CD8-positive, alpha-beta T cell (primary cell): ENCODE measurements at regions of chr16 and their contacts with region 1.

Region 1: DNA sequence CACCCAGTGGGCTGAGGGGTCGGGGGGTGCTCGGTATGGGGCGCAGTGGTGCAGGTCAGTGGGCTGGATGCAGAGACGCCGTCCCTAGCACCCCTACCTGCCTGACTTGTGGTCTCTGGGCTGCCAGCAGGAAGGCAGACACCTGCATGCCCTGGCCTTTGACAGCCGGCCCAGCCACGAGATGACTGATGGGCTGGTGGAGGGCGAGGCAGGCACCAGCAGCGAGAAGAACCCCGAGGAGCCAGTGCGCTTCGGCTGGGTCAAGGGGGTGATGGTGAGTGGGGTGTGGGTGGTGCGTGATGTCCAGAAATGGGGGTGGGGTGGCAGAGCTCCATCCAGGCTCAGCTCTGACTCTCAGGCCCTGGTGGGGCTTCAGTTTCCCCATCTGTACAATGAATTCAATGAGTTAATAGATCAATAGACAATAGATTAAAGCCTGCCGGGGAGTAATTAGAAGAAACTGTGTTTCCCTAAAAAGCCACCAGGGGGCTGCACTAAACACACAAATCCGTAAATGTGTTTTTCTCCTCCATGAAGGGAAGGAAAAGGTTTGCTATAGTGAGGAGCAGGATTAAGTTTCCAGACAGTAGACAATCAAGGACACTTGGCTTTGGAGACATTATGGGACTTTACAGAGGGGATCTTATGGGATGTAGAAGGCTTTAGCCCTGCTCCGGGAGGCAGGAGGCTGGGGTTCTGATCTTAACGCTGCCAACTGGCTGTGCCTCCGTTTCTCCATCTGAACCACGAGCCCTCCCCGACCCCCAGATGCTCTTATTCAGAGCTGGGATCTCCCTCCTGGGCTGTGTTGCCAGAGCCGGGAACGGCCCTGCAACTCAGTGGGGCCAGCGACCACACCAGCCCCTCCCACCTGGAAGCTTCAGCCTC is 2.2 kb downstream of the SLC12A3 start:
- DNase-seq: peak in 6 of 9 experiments; percentile 11 to 73 (median 50)
- ATAC-seq: peak; percentile 58
- H3K4me3 ChIP-seq: no peak overlapping the region
- H3K4me3 Mint-ChIP-seq: no peak overlapping the region
- H3K27ac ChIP-seq: no peak overlapping the region
- H3K27ac Mint-ChIP-seq: no peak overlapping the region
- H3K4me1 ChIP-seq: peaks cover 13% of the 10 kb centered on the region
- H3K4me1 Mint-ChIP-seq: peaks cover 21% of the 10 kb centered on the region
- H3K27me3 ChIP-seq: no peaks in the 10 kb centered on the region
- H3K27me3 Mint-ChIP-seq: no peaks in the 10 kb centered on the region
- CTCF ChIP-seq: peak; percentile 82

Region 2: DNA sequence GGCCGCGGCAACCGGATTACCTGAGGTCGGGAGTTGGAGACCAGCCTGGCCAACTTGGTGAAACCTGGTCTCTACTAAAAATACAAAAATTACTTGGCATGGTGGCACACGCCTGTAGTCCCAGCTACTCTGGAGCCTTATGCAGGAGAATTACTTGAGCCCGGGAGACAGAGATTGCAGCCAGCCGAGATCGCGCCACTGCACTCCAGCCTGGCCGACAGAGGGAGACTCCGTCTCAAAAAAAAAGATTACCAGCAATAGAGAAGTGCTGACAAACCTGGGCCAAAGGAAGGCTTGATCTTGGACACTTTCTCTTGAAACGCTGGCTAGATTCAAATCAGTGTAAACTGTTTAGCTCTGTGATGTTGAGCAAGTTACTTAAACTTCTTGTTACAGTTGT is 193.3 kb before region 1 on chr16:
- CTCF ChIA-PET with region 1: no interaction called
- POLR2A ChIA-PET with region 1: no interaction called
- intact Hi-C with region 1: loop called in 1 of 2 experiments (anchors 10 kb)
- DNase-seq: peak in 4 of 9 experiments; percentile 23 to 57 (median 34)
- ATAC-seq: peak; percentile 32
- H3K4me3 ChIP-seq: no peak overlapping the region
- H3K4me3 Mint-ChIP-seq: no peak overlapping the region
- H3K27ac ChIP-seq: no peak overlapping the region
- H3K27ac Mint-ChIP-seq: peak overlapping the region; percentile 11
- H3K4me1 ChIP-seq: peaks cover 12% of the 10 kb centered on the region
- H3K4me1 Mint-ChIP-seq: peaks cover 27% of the 10 kb centered on the region
- H3K27me3 ChIP-seq: peaks cover 7 to 13% of the 10 kb centered on the region in 2 experiments
- H3K27me3 Mint-ChIP-seq: peaks cover 23% of the 10 kb centered on the region
- CTCF ChIP-seq: peak; percentile 52

Region 3: DNA sequence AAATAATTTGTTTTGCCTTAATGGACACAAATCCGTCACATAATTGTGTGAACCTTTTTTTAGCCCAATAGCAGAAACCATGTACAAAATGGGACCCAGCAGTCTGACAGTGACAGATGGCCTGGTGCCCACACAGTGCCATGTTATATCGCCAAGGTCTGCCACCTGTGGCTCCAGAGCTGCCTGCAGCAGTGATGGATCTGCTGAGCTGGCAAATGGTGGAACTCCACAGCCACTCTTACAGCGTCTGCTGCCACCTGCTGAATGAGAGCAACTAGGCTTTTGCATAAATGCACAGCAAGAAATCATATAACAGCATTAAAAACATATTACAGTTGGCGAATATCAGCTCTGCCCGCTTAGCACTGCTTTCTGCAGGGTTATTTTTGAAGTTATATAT is 77.8 kb before region 1 on chr16:
- CTCF ChIA-PET with region 1: interaction called, 20 read pairs
- POLR2A ChIA-PET with region 1: no interaction called
- intact Hi-C with region 1: loop called in 1 of 2 experiments (anchors 2 kb)
- DNase-seq: peak in 4 of 9 experiments; percentile 5 to 50 (median 44)
- ATAC-seq: peak; percentile 55
- H3K4me3 ChIP-seq: no peak overlapping the region
- H3K4me3 Mint-ChIP-seq: no peak overlapping the region
- H3K27ac ChIP-seq: no peak overlapping the region
- H3K27ac Mint-ChIP-seq: no peak overlapping the region
- H3K4me1 ChIP-seq: no peaks in the 10 kb centered on the region
- H3K4me1 Mint-ChIP-seq: peaks cover 3% of the 10 kb centered on the region
- H3K27me3 ChIP-seq: no peaks in the 10 kb centered on the region
- H3K27me3 Mint-ChIP-seq: no peaks in the 10 kb centered on the region
- CTCF ChIP-seq: peak; percentile 23

Region 4: GRCh38 chr16:56851671-56852400 is 15.4 kb before region 1 on chr16:
- CTCF ChIA-PET with region 1: interaction called, 23 read pairs
- POLR2A ChIA-PET with region 1: interaction called, 3 read pairs
- intact Hi-C with region 1: no loop called
- DNase-seq: no peak
- ATAC-seq: no peak
- H3K4me3 ChIP-seq: no peak overlapping the region
- H3K4me3 Mint-ChIP-seq: no peak overlapping the region
- H3K27ac ChIP-seq: no peak overlapping the region
- H3K27ac Mint-ChIP-seq: no peak overlapping the region
- H3K4me1 ChIP-seq: peaks cover 10% of the 10 kb centered on the region
- H3K4me1 Mint-ChIP-seq: peaks cover 25% of the 10 kb centered on the region
- H3K27me3 ChIP-seq: no peaks in the 10 kb centered on the region
- H3K27me3 Mint-ChIP-seq: no peaks in the 10 kb centered on the region
- CTCF ChIP-seq: no peak

Region 5: GRCh38 chr16:56950881-56951771 is 83.9 kb after region 1 on chr16:
- CTCF ChIA-PET with region 1: interaction called, 72 read pairs
- POLR2A ChIA-PET with region 1: interaction called, 3 read pairs
- intact Hi-C with region 1: loop called in 1 of 2 experiments (anchors 1 kb)
- DNase-seq: peak in 8 of 9 experiments; percentile 43 to 72 (median 56)
- ATAC-seq: peak; percentile 94
- H3K4me3 ChIP-seq: no peak overlapping the region
- H3K4me3 Mint-ChIP-seq: no peak overlapping the region
- H3K27ac ChIP-seq: no peak overlapping the region
- H3K27ac Mint-ChIP-seq: no peak overlapping the region
- H3K4me1 ChIP-seq: no peaks in the 10 kb centered on the region
- H3K4me1 Mint-ChIP-seq: peaks cover 12% of the 10 kb centered on the region
- H3K27me3 ChIP-seq: no peaks in the 10 kb centered on the region
- H3K27me3 Mint-ChIP-seq: no peaks in the 10 kb centered on the region
- CTCF ChIP-seq: peak; percentile 61

Region 6: DNA sequence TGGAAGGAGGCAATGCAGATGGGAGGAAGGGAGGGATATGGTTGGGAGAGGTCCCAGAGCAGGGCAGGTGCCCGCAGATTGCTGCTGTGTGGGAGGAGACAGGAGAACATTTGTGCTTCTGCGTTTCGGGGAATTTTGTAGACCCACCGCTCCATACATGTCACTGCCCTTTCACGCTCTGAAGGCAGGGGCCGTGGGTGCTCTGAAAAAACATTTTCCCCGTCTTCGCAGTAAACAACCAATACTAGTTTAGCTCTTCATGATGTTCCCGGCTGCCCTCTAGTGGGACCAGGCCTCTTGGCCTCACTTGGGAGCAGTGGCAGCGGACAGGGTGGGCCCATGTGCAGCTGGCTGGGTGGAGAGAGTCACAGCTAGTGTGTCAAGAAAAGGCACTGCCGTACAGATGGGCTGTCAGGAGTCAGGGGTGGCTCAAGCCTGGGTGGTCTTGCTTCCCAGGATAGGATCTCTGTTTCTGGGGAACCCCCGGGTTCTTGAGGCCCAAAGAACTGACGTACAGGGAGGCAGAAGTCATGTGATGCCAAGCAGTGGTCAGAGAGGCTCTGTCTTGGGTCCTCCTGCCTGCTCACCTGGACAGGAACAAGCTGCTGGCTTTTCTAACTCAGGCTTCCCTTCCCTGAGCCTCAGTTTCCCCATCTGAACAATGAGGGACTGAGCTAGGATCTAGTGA is 178.7 kb after region 1 on chr16:
- CTCF ChIA-PET with region 1: no interaction called
- POLR2A ChIA-PET with region 1: no interaction called
- intact Hi-C with region 1: loop called (anchors 5 to 10 kb)
- DNase-seq: peak in 8 of 9 experiments; percentile 27 to 76 (median 58)
- ATAC-seq: peak; percentile 5
- H3K4me3 ChIP-seq: no peak overlapping the region
- H3K4me3 Mint-ChIP-seq: peak overlapping the region; percentile 50
- H3K27ac ChIP-seq: peak overlapping the region; percentile 2 to 59
- H3K27ac Mint-ChIP-seq: peak overlapping the region; percentile 93
- H3K4me1 ChIP-seq: peaks cover 52% of the 10 kb centered on the region
- H3K4me1 Mint-ChIP-seq: peaks cover 54% of the 10 kb centered on the region
- H3K27me3 ChIP-seq: no peaks in the 10 kb centered on the region
- H3K27me3 Mint-ChIP-seq: no peaks in the 10 kb centered on the region
- CTCF ChIP-seq: peak; percentile 38

Region 7: GRCh38 chr16:57167953-57168352 is 300.8 kb after region 1 on chr16:
- CTCF ChIA-PET with region 1: interaction called, 3 read pairs
- POLR2A ChIA-PET with region 1: no interaction called
- intact Hi-C with region 1: loop called in 1 of 2 experiments (anchors 1 kb)
- DNase-seq: peak in 3 of 9 experiments; percentile 21 to 85 (median 76)
- ATAC-seq: peak; percentile 99
- H3K4me3 ChIP-seq: no peak overlapping the region
- H3K4me3 Mint-ChIP-seq: no peak overlapping the region
- H3K27ac ChIP-seq: no peak overlapping the region
- H3K27ac Mint-ChIP-seq: no peak overlapping the region
- H3K4me1 ChIP-seq: no peaks in the 10 kb centered on the region
- H3K4me1 Mint-ChIP-seq: peaks cover 9% of the 10 kb centered on the region
- H3K27me3 ChIP-seq: no peaks in the 10 kb centered on the region
- H3K27me3 Mint-ChIP-seq: no peaks in the 10 kb centered on the region
- CTCF ChIP-seq: peak; percentile 70